Transverse colon (tissue), 4 donors: ENCODE measurements at regions of chr14 and their contacts with region 1.

Region 1: DNA sequence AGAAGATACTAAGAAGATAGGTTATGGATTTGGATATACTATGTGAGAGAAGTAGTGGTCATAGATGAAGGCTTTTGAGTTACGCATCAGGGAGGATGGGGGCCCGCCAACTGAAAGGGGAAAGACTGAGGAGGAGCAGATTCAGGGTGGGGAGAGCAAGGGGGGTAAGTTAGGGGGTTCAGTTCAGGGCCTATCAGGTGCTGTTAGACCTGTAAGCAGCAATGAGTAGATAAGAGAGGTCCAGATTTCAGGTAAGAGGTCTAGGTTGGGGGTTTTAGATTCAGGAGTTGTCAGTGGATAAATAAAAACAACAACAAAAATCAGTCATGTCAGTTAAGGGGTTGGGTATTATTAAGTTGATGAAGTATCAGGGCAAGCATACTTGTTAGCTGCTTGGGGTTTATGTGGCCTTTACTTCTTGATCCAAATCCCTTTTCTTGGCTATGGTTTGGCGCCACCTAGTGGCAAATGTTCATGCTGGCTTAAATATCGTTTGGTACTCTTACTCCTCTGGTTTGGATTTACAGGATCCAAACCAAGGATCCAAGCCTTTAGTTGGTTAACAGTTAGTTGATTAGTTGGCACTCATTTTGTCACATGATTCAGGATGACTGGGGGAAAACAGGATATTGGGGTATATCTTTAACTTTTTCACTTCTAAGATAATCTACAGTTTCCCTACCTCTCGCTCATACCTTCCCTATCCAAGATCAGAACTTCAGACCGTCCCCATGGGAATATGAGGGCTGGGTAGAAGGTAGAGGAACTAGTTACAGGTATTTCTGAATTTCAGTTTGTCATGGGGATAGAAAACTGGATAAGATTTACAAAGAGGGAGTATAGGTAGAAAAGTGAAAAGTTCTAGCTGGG is 65.1 kb downstream of the PCNX1 start:
- DNase-seq: peak; percentile 89
- H3K4me3 ChIP-seq: no peak overlapping the region
- H3K27ac ChIP-seq: no peak overlapping the region
- H3K4me1 ChIP-seq: no peaks in the 10 kb centered on the region
- H3K27me3 ChIP-seq: no peaks in the 10 kb centered on the region
- CTCF ChIP-seq: peak; percentile 80 to 96 (median 93)
- EP300 ChIP-seq: no peak
- POLR2A ChIP-seq: no peak

Region 2: DNA sequence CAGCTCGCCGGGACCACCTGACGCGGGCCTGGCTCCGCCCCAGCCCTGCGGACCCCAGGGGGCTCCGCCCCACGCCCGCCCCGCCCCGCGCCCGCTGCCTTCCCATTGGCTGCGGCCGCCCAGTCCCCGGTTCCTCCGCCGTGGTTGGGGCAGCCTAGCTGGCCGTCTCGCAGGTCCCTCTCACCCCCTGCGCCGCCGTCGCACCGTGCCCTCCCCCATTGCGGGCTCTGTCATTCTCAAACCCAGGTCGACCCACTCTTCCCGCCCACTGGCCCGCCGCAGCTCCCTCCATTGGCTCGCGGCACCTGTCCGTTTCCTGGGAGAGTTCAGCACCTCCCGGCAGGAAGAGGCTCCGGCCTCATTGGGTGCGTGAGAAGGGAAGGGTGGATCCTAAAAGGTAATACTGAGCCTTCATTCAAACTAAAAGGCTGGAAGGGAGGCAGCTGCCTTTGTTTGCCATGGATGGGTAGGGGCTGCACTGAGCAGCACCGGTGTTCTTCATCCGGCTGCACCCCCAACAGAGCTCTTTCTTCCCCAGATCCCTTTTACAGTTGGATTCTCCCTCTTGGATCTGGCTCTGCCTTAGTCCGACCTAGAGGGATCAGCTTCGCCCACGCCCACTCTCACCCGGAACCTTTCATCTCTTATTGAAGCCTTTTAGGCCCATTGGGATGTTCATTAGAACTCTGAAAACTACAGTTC is 162.6 kb before region 1 on chr14:
- in situ Hi-C with region 1: loop called in 1 of 4 experiments (anchors 10 kb)
- intact Hi-C with region 1: no loop called
- DNase-seq: peak; percentile 97
- H3K4me3 ChIP-seq: peak overlapping the region in 3 of 4 donors; percentile 82 to 86 (median 84)
- H3K27ac ChIP-seq: peak overlapping the region; percentile 84 to 90 (median 86)
- H3K4me1 ChIP-seq: peaks cover 0 to 20% (median 11%) of the 10 kb centered on the region in 4 donors
- H3K27me3 ChIP-seq: peaks cover 25% of the 10 kb centered on the region
- CTCF ChIP-seq: no peak
- EP300 ChIP-seq: no peak
- POLR2A ChIP-seq: no peak

Region 3: DNA sequence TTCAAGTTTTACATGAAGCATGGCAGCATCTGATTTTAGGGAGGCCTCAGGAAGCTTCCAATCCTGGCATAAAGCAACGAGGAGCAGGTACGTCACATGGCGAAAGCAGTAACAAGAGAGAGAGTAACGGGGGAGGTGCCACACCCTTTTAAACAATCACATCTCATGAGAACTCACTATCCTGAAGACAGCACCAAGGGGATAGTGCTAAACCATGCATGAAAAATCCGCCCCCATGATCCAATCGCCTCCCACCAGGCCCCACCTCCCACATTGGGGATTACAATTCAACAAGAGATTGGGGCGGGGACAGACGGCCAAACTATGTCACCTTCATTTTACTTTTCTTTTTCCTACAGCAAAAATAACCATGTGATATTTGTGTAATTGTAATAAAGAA is 155.8 kb before region 1 on chr14:
- in situ Hi-C with region 1: loop called (anchors 5 to 10 kb)
- intact Hi-C with region 1: loop called (anchors 10 kb)
- DNase-seq: no peak
- H3K4me3 ChIP-seq: no peak overlapping the region
- H3K27ac ChIP-seq: no peak overlapping the region
- H3K4me1 ChIP-seq: peaks cover 0 to 11% (median 5%) of the 10 kb centered on the region in 4 donors
- H3K27me3 ChIP-seq: peaks cover 24% of the 10 kb centered on the region
- CTCF ChIP-seq: no peak
- EP300 ChIP-seq: no peak
- POLR2A ChIP-seq: no peak

Region 4: DNA sequence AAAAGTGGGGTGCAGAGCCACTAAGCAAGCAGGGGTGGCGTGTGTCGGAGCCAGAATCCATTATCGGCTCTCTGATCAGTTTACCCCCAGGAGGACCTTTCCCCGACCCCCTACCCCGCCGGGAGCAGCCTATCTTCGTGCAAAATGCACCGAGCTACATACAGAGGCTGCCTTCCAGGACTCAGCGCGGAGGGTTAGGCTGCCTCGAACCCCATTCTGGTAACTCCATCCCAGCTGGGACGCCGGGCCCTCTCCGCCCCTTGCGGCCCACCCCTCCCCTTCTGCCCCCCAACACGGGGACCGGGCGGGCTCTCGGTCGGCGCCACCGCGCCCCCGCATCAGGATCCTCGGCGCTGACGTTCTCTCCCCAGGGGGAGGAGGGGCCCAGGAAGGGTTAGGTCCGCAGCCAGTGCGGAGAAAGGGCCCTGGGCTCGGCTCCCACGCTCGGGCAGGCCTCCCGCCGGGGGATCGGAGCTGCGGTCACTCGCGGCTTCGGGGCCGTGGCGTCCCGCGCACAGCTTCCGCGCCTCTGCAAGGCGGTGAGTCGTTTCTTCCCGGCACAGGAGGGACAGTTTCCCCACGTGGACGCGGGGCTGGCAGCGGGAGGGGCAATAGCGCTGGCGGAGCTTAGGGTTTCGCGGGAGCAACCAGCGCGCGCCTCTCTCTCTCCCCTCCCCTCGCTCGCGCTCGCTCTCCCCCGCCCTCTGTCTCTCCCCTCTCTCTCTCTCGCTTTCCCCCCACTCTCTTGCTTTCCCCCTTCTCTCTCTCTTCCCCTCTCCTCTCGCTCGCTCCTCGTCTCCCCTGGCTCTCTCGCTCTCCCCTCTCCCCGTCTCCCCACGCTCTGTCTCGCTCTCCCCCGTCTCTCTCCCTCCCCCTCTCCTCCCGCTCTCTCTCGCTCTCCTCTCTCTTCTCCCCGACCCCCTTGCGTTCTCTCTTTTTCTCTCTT is 150.5 kb before region 1 on chr14:
- in situ Hi-C with region 1: loop called (anchors 5 to 10 kb)
- intact Hi-C with region 1: loop called (anchors 10 kb)
- DNase-seq: peak; percentile 58
- H3K4me3 ChIP-seq: peak overlapping the region; percentile 43 to 69 (median 50)
- H3K27ac ChIP-seq: no peak overlapping the region
- H3K4me1 ChIP-seq: peaks cover 0 to 20% (median 11%) of the 10 kb centered on the region in 4 donors
- H3K27me3 ChIP-seq: peaks cover 44% of the 10 kb centered on the region
- CTCF ChIP-seq: no peak
- EP300 ChIP-seq: no peak
- POLR2A ChIP-seq: no peak

Region 5: DNA sequence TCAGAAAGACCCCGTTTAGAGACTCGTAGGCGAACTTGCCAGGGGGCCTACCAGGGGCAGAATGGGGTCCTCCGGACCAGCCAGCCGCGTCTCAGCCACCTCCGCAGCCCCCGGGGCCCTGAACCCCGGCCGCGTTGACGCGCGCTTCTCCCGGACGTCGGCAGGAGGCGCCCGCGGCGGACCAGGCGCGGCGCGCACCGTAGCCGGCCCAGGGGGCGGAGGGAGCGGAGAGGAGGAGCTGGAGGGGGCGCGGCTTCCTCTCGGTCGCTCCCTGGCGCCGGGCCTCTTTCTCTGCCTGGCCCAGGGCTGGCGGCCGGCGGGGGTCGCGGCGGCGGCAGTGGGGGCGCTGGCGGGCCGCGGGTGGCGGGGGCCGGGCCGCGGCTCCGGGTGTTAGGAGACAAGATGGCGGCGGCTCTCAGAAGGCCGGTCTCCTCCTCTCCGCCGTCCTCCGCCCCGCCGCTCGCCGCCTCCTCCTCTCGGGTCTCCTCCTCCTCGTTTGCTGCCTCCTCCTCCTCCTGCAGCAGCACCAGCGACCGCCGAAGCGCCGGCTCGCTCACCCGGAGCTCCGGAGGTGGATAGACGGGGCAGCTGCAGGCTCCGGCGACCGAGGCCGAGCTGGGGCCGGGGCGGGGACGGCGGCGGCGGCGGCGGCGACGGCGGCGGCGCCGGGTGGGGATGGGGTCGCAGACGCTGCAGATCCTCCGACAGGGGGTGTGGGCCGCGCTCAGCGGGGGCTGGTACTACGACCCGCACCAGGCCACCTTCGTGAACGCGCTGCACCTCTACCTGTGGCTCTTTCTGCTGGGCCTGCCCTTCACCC is 65.0 kb before region 1 on chr14 and contains the start of gene PCNX1:
- in situ Hi-C with region 1: no loop called
- intact Hi-C with region 1: loop called (anchors 5 kb)
- DNase-seq: peak; percentile 90
- H3K4me3 ChIP-seq: peak within 1 kb of the TSS; percentile 64 to 94 (median 80)
- H3K27ac ChIP-seq: peak within 1 kb of the TSS; percentile 81 to 97 (median 94)
- H3K4me1 ChIP-seq: peaks cover 6 to 57% (median 29%) of the 10 kb centered on the region in 4 donors
- H3K27me3 ChIP-seq: no peaks in the 10 kb centered on the region
- CTCF ChIP-seq: peak; percentile 65 to 86 (median 84)
- EP300 ChIP-seq: no peak
- POLR2A ChIP-seq: peak; percentile 36
- total RNA-seq, gene PCNX1: 15.0 to 64.6 (median 46.0) TPM